ENCODE measurements at regions of chr6 and their contacts with region 1.

Region 1: DNA sequence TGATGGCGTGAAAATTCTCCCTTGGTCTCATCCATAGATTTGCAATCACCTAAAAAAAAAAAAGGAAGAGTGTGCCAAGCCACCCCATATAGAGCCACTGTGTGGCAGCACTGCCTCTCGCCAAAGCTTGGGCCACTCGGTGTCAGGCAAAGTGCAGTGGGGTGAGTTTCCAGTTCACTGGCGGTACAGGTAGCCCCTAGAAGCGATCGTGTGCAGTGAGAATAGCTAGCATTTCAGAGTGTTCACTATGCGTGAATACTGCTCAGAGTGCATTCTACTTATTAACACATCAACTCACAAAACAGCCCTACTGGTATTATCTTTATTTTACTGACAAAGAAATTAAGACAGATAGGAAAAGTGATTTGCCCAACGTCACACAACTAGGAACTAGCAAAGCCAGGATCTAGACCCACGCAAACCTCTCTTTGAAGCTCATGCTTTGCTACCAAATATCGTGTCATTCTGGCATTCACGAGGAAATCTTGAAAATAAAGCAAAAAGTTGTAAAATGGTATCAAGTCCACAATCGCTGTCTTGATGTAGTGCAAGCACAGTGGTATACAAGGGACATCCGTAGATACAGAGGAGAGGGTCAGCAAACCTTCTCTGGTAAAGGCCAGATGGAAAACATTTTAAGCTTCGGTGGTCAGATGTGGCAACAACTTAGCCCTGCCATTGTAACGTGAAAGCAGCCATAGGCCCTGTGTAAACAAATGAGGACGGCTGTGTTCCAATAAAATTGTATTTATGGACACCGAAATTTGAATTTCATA is 10.4 kb upstream of the GCNT2 start:
- DNase-seq: peak; percentile 68
- H3K4me3 ChIP-seq: peak overlapping the region; percentile 5
- H3K27ac ChIP-seq: no peak overlapping the region
- H3K4me1 ChIP-seq: no peaks in the 10 kb centered on the region
- H3K27me3 ChIP-seq: no peaks in the 10 kb centered on the region
- CTCF ChIP-seq: peak; percentile 62

Region 2: DNA sequence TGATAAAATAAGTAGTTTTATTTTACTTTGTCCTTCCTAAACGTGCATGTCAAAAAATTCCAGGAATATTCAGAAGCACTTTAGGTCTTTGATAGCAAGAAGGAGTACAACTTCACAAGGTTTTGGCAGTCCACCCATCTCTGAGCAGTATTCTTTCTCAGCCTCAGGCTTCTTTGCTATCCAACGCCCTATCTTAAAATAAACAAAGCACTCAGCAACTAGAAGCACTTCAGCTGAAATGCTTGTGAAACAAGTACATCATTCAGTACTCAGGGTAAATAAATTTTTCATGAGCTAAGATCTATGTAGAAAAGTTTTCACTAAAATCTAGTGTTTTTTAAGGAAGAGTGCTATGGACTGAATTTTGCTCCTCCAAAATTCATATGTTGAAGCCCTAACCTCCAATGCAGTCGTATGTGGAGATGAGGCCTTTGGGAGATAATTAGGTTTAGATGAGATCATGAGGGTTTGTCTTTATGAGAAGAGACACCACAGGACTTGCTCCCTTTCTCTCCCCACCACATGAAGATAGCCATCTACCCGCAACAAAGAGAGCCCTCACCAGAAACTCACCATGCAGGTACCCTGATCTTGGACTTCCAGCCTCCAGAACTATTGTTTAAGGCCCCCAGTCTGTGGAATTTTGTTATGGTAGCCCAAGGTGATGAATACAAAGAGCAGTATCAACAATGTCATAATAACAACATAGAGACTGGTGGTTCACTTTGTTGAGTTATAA is 635.0 kb before region 1 on chr6:
- intact Hi-C with region 1: no loop called
- DNase-seq: no peak
- H3K4me3 ChIP-seq: no peak overlapping the region
- H3K27ac ChIP-seq: no peak overlapping the region
- H3K4me1 ChIP-seq: no peaks in the 10 kb centered on the region
- H3K27me3 ChIP-seq: no peaks in the 10 kb centered on the region
- CTCF ChIP-seq: no peak

Region 3: GRCh38 chr6:10694302-10695085 is 183.7 kb after region 1 on chr6 and contains the starts of genes C6orf52 and PAK1IP1:
- intact Hi-C with region 1: loop called (anchors 5 kb)
- DNase-seq: peak; percentile 94
- H3K4me3 ChIP-seq: peak within 1 kb of the TSS; percentile 56
- H3K27ac ChIP-seq: peak within 1 kb of the TSS; percentile 83
- H3K4me1 ChIP-seq: peaks cover 3% of the 10 kb centered on the region
- H3K27me3 ChIP-seq: no peaks in the 10 kb centered on the region
- CTCF ChIP-seq: no peak
- total RNA-seq, gene C6orf52: 0.69 to 0.99 TPM
- total RNA-seq, gene PAK1IP1: 6.6 to 16.3 TPM

Region 4: GRCh38 chr6:10800829-10801535 is 290.2 kb after region 1 on chr6:
- intact Hi-C with region 1: loop called (anchors 2 kb)
- DNase-seq: peak; percentile 51
- H3K4me3 ChIP-seq: no peak overlapping the region
- H3K27ac ChIP-seq: no peak overlapping the region
- H3K4me1 ChIP-seq: no peaks in the 10 kb centered on the region
- H3K27me3 ChIP-seq: no peaks in the 10 kb centered on the region
- CTCF ChIP-seq: peak; percentile 98

Measured in colonic mucosa (tissue), 4 donors.